ENCODE measurements at regions of chr1 and their contacts with region 1.

Region 1: GRCh38 chr1:54488779-54489626 is 59.0 kb upstream of the ACOT11 start:
- DNase-seq: peak; percentile 82
- ATAC-seq: peak; percentile 71
- H3K4me3 Mint-ChIP-seq: peak overlapping the region; percentile 73
- H3K27ac Mint-ChIP-seq: peak overlapping the region; percentile 69
- H3K4me1 Mint-ChIP-seq: peaks cover 39% of the 10 kb centered on the region
- H3K27me3 Mint-ChIP-seq: peaks cover 6% of the 10 kb centered on the region

Region 2: DNA sequence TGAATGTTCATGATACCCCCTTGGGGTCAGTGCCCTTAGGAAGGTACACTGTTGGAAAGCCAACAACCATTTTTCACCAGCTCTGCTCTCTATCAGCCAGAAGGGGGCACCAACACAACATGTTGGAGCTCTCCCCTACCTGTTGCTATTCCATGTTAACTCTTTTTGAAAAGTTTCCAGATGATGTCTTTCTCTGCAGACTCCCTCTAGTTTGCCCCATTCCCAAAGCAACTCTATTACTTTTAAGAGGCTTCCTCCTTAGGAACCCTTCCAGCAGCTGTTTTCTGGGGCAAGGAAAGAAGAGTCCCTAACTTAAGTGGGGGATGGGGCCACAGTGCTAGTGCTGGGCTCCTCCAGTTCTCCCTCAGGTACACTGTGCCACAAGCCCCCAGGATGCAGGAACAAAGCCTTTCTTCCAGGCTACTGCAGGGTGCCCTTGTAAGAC is 628.0 kb before region 1 on chr1:
- CTCF ChIA-PET with region 1: interaction called, 3 read pairs
- POLR2A ChIA-PET with region 1: no interaction called
- intact Hi-C with region 1: loop called in 1 of 2 experiments (anchors 5 kb)
- DNase-seq: peak; percentile 65
- ATAC-seq: peak; percentile 88
- H3K4me3 Mint-ChIP-seq: no peak overlapping the region
- H3K27ac Mint-ChIP-seq: no peak overlapping the region
- H3K4me1 Mint-ChIP-seq: peaks cover 12% of the 10 kb centered on the region
- H3K27me3 Mint-ChIP-seq: no peaks in the 10 kb centered on the region

Region 3: DNA sequence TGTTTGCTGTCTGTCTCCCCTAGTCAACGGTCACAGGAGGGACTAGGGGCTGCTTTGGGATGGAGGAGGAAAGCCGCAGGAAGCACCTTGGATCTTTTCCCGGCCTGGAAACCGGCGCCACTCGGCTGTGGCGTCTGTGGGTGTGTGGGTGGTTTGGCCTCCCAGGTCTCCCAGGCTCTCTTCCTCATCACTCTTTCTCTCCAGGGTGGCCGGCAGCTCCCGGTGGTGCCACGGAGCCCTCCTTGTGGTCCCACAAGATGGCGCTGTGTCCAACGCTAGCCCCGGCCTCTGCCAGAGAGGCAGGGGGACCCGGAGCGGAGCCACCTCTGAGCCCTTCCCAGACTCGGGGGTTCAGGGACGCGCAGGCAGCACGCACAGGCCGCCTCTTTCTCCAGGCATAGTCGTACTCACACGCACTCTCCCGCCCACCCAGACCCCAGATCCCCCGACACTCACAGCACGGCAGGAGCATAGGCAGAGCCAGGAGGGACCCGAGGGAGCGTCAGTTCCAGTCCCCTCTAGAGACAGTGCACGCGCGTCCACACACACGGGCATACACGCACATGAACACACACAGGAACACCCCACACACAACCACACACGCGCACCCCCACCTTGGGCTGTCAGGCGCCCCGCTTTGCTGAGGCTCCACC is 367.4 kb before region 1 on chr1:
- CTCF ChIA-PET with region 1: interaction called, 4 read pairs
- POLR2A ChIA-PET with region 1: no interaction called
- intact Hi-C with region 1: loop called (anchors 1 kb)
- DNase-seq: peak; percentile 84
- ATAC-seq: peak; percentile 92
- H3K4me3 Mint-ChIP-seq: no peak overlapping the region
- H3K27ac Mint-ChIP-seq: no peak overlapping the region
- H3K4me1 Mint-ChIP-seq: peaks cover 4% of the 10 kb centered on the region
- H3K27me3 Mint-ChIP-seq: no peaks in the 10 kb centered on the region

Region 4: GRCh38 chr1:54199765-54200518 is 289.1 kb before region 1 on chr1 and contains the starts of genes CYB5RL and MRPL37:
- CTCF ChIA-PET with region 1: interaction called, 11 read pairs
- POLR2A ChIA-PET with region 1: no interaction called
- intact Hi-C with region 1: loop called (anchors 1 to 5 kb)
- DNase-seq: peak; percentile 94
- ATAC-seq: peak; percentile 99
- H3K4me3 Mint-ChIP-seq: peak within 1 kb of the TSS; percentile 83
- H3K27ac Mint-ChIP-seq: peak within 1 kb of the TSS; percentile 84
- H3K4me1 Mint-ChIP-seq: peaks cover 30% of the 10 kb centered on the region
- H3K27me3 Mint-ChIP-seq: no peaks in the 10 kb centered on the region
- total RNA-seq, gene CYB5RL: 13.1 to 13.5 TPM
- total RNA-seq, gene MRPL37: 177 to 189 TPM

Region 5: DNA sequence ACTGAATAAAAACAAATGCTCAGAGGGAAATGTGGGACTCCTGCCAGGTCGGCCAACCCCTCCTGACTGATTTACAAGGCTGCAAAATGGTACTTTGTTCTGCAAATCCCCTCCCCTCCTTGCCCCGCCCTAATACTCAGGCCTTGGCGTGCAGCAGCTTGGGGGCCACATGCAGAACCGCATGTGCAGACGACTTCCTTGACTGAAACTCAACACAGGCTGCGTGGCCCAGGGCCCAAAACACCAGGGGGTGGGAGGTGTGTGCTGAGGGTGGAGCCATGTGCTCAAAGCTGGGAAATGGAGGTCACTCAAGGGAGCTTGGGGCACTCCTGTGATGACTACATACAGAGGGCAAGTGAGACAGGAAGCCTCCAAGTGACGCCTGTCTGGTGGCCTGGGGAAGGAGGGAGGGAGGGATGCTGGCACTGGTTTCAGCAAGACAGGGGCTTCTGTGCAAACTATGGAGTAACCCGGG is 201.8 kb before region 1 on chr1:
- CTCF ChIA-PET with region 1: interaction called, 3 read pairs
- POLR2A ChIA-PET with region 1: interaction called, 6 read pairs
- intact Hi-C with region 1: loop called (anchors 2 to 5 kb)
- DNase-seq: peak; percentile 90
- ATAC-seq: peak; percentile 88
- H3K4me3 Mint-ChIP-seq: peak overlapping the region; percentile 59
- H3K27ac Mint-ChIP-seq: peak overlapping the region; percentile 97
- H3K4me1 Mint-ChIP-seq: peaks cover 94% of the 10 kb centered on the region
- H3K27me3 Mint-ChIP-seq: no peaks in the 10 kb centered on the region

Region 6: GRCh38 chr1:54355931-54356679 is 132.9 kb before region 1 on chr1:
- CTCF ChIA-PET with region 1: interaction called, 4 read pairs
- POLR2A ChIA-PET with region 1: interaction called, 4 read pairs
- intact Hi-C with region 1: loop called (anchors 2 to 5 kb)
- DNase-seq: peak; percentile 33
- ATAC-seq: no peak
- H3K4me3 Mint-ChIP-seq: peak overlapping the region; percentile 77
- H3K27ac Mint-ChIP-seq: peak overlapping the region; percentile 95
- H3K4me1 Mint-ChIP-seq: peaks cover 89% of the 10 kb centered on the region
- H3K27me3 Mint-ChIP-seq: no peaks in the 10 kb centered on the region

Region 7: DNA sequence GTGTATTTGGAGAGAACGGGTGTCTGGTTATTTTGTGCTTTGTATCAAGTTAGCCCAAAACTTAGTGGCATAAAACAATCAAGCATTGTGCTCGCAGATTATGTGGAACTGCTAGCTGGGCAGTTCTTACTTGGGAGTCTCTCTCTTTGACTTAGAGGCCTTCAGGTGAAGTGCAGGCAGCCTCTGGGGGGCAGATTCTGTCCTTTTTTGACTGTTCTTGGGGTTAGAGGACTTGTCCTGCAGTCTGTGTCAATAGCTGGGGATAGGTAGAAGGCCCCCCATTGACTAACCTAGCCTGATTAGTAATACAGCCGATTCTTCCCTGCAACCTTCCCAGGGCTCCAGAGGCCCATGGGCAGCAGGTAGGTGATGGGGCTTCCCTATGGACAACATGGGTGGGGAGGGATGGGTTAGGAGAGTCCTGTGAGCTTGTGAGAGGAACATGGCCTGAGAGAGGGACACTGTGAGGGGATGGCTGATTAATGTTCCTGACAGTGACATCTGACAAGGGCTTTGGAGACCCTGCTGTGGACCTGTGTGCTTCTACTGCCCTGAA is 21.8 kb after region 1 on chr1:
- CTCF ChIA-PET with region 1: no interaction called
- POLR2A ChIA-PET with region 1: no interaction called
- intact Hi-C with region 1: no loop called
- DNase-seq: no peak
- ATAC-seq: no peak
- H3K4me3 Mint-ChIP-seq: no peak overlapping the region
- H3K27ac Mint-ChIP-seq: no peak overlapping the region
- H3K4me1 Mint-ChIP-seq: no peaks in the 10 kb centered on the region
- H3K27me3 Mint-ChIP-seq: no peaks in the 10 kb centered on the region

Region 8: GRCh38 chr1:54547601-54548388 is 58.8 kb after region 1 on chr1 and contains the start of gene ACOT11:
- CTCF ChIA-PET with region 1: no interaction called
- POLR2A ChIA-PET with region 1: no interaction called
- intact Hi-C with region 1: no loop called
- DNase-seq: no peak
- ATAC-seq: no peak
- H3K4me3 Mint-ChIP-seq: no peak within 1 kb of the TSS
- H3K27ac Mint-ChIP-seq: no peak within 1 kb of the TSS
- H3K4me1 Mint-ChIP-seq: peaks cover 9% of the 10 kb centered on the region
- H3K27me3 Mint-ChIP-seq: no peaks in the 10 kb centered on the region
- total RNA-seq, gene ACOT11: 2.0 TPM

Region 9: DNA sequence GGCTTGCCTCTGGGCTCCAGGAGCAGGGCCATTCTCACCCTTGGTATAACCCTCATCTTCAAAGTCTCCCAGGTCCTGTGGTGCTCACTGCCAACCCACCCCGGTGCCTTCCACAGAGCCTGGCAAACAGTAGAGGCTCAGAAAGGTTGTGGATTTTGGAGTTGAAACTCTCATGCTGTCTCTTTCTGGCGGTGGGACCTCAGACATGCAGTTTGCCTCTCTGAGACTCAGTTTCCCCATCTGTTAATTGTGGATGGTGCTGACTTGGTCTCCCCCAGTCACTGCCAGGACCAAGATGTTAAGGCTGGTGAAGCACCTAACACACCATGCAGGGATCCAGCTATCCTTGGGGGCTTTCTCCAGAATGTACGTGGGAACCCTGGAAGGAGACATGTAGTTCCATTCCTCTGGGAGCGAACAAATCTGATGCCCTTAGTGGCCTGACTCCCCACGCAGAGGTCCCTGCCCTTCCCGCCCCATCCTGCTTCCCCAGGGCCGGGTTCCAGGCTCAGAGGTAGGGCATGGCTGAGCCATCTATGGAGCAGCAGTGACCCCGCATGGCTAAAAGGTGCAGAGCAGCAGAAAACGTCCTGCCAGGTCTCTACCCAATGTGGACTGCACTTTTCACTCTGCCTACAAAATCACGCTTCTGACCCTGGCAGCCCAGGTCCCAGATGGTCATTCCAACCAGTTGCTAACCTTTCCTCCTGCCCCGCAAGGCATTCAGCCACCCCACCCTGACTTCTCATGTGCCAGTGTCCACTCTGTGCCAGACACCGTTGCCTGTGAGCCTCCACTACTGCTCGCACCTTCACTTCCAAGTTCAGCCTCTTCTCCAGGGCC is 321.3 kb after region 1 on chr1:
- CTCF ChIA-PET with region 1: no interaction called
- POLR2A ChIA-PET with region 1: no interaction called
- intact Hi-C with region 1: loop called (anchors 5 to 10 kb)
- DNase-seq: peak; percentile 84
- ATAC-seq: peak; percentile 91
- H3K4me3 Mint-ChIP-seq: no peak overlapping the region
- H3K27ac Mint-ChIP-seq: no peak overlapping the region
- H3K4me1 Mint-ChIP-seq: peaks cover 3% of the 10 kb centered on the region
- H3K27me3 Mint-ChIP-seq: no peaks in the 10 kb centered on the region

Region 10: GRCh38 chr1:55092475-55092874 is 603.5 kb after region 1 on chr1:
- CTCF ChIA-PET with region 1: no interaction called
- POLR2A ChIA-PET with region 1: no interaction called
- intact Hi-C with region 1: no loop called
- DNase-seq: no peak
- ATAC-seq: no peak
- H3K4me3 Mint-ChIP-seq: no peak overlapping the region
- H3K27ac Mint-ChIP-seq: no peak overlapping the region
- H3K4me1 Mint-ChIP-seq: peaks cover 5% of the 10 kb centered on the region
- H3K27me3 Mint-ChIP-seq: no peaks in the 10 kb centered on the region

Region 11: GRCh38 chr1:55262850-55263249 is 773.8 kb after region 1 on chr1:
- CTCF ChIA-PET with region 1: no interaction called
- POLR2A ChIA-PET with region 1: no interaction called
- intact Hi-C with region 1: no loop called
- DNase-seq: no peak
- ATAC-seq: no peak
- H3K4me3 Mint-ChIP-seq: no peak overlapping the region
- H3K27ac Mint-ChIP-seq: no peak overlapping the region
- H3K4me1 Mint-ChIP-seq: peaks cover 6% of the 10 kb centered on the region
- H3K27me3 Mint-ChIP-seq: no peaks in the 10 kb centered on the region